ENCODE measurements at regions of chr2 and their contacts with region 1.

Region 1: DNA sequence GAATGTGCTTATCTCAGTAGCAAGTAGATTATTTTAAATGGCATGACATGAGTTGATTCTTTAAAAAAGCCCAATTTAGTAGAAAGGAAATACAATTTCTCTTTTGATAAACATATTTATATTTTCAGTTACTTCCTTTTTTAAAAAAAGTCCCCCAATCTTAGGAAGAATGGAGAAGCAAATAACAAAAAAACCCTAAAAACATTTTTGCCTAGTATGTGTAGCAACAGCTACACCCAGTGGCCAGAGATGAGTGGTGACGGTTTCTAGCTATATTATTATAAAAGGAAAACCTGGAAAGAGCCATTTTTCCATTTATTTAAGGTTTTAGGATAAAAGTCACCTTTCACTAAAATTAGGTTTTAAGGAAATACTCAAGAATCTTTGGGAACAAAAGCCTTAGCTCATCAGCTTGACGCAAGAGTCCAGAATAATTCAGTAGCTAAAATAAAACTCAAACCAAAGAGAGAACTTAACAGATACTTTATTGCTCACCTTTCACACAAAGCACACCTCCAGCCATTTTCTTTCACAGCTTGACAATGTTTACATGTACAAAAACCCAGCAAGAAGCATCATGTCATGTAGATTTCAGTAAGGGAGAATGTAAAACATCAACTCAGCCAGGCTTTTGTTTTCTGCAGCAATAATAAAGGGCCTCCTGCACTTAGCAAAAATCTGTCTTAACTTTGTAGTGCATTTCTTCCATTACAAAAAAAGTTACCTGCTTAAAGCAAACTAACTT is 15.7 kb downstream of the FAM98A start:
- DNase-seq: no peak
- H3K4me3 Mint-ChIP-seq: no peak overlapping the region
- H3K27ac Mint-ChIP-seq: no peak overlapping the region
- H3K4me1 Mint-ChIP-seq: peaks cover 13% of the 10 kb centered on the region
- H3K27me3 Mint-ChIP-seq: no peaks in the 10 kb centered on the region

Region 2: GRCh38 chr2:32772638-32773447 is 810.5 kb before region 1 on chr2:
- intact Hi-C with region 1: loop called (anchors 5 kb)
- DNase-seq: no peak
- H3K4me3 Mint-ChIP-seq: no peak overlapping the region
- H3K27ac Mint-ChIP-seq: no peak overlapping the region
- H3K4me1 Mint-ChIP-seq: no peaks in the 10 kb centered on the region
- H3K27me3 Mint-ChIP-seq: no peaks in the 10 kb centered on the region

Region 3: DNA sequence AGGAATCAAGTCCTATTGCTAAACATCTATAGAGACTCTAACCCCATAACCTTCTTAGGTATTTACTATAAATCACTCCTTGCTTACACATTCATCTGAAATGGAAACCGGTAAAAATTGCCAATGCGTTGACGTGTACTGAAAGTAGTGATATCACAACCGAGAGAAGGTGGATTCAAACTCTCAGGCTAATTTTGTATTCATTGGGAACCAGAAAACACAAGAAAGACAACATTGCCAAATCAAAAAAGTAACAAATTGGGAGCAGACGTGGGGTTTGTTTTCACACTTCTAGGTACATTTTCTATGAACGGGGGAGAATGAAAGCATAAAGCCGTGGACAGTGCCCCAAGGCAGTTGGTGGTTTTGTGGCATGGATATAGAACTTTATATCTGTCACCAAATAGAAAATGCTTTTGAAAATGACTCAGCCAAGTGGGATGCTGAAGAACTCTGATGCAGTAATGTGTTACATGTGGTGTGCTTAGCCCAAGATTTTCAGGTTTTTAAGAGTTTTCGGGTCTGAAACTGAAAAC is 262.1 kb before region 1 on chr2:
- intact Hi-C with region 1: loop called (anchors 5 kb)
- DNase-seq: peak; percentile 11
- H3K4me3 Mint-ChIP-seq: peak overlapping the region; percentile 41
- H3K27ac Mint-ChIP-seq: peak overlapping the region; percentile 75
- H3K4me1 Mint-ChIP-seq: peaks cover 25% of the 10 kb centered on the region
- H3K27me3 Mint-ChIP-seq: peaks cover 3% of the 10 kb centered on the region

Region 4: DNA sequence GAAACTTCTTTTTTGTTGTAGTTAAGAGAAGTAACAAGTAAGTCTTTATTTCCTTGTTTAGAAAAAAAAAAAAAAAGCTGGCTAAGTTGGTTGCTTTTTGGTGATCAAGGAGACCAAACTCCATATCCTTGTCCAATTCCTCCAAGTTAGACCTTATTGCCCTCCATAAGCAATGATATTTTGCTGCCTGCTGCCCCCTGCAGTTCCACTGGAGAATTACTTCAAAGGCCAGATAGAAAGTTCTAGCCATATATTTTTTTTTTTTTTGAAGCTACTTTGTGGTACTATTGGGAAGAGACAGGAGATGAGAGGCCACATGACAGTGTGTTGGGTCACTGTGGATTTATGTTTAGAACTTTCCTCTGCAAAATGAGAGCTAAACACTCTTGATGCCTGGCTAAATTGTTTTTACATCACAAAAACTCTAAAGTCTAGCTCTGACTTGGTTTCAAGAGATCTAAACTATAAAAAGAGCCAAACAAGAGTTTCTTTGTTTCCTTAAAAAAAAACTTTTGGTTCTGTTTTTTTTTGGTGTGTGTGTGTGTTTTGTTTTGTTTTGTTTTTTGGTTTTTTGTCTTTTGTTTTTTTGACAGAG is 187.6 kb before region 1 on chr2:
- intact Hi-C with region 1: loop called (anchors 2 kb)
- DNase-seq: peak; percentile 16
- H3K4me3 Mint-ChIP-seq: no peak overlapping the region
- H3K27ac Mint-ChIP-seq: no peak overlapping the region
- H3K4me1 Mint-ChIP-seq: no peaks in the 10 kb centered on the region
- H3K27me3 Mint-ChIP-seq: peaks cover 5% of the 10 kb centered on the region

Region 5: GRCh38 chr2:33441235-33441810 is 142.0 kb before region 1 on chr2:
- intact Hi-C with region 1: loop called (anchors 1 kb)
- DNase-seq: no peak
- H3K4me3 Mint-ChIP-seq: no peak overlapping the region
- H3K27ac Mint-ChIP-seq: no peak overlapping the region
- H3K4me1 Mint-ChIP-seq: no peaks in the 10 kb centered on the region
- H3K27me3 Mint-ChIP-seq: peaks cover 5% of the 10 kb centered on the region

Region 6: GRCh38 chr2:33497221-33497650 is 86.1 kb before region 1 on chr2:
- intact Hi-C with region 1: loop called (anchors 5 kb)
- DNase-seq: no peak
- H3K4me3 Mint-ChIP-seq: peak overlapping the region; percentile 23
- H3K27ac Mint-ChIP-seq: peak overlapping the region; percentile 49
- H3K4me1 Mint-ChIP-seq: peaks cover 50% of the 10 kb centered on the region
- H3K27me3 Mint-ChIP-seq: peaks cover 2% of the 10 kb centered on the region

Measured in activated T-helper 1 cell treated with anti-CD3 and anti-CD28 coated beads, Interleukin-12 subunit alpha, Interleukin-12 subunit beta, Interleukin-2, Interleukin-4 antibody, amounts not matched to agents 30 ng/mL and 10 ng/mL and 1 ng/mL, durations not matched to agents 14 hours and 24 hours and 36 hours (primary cell).